ENCODE measurements at regions of chr19 and their contacts with region 1.

Region 1: DNA sequence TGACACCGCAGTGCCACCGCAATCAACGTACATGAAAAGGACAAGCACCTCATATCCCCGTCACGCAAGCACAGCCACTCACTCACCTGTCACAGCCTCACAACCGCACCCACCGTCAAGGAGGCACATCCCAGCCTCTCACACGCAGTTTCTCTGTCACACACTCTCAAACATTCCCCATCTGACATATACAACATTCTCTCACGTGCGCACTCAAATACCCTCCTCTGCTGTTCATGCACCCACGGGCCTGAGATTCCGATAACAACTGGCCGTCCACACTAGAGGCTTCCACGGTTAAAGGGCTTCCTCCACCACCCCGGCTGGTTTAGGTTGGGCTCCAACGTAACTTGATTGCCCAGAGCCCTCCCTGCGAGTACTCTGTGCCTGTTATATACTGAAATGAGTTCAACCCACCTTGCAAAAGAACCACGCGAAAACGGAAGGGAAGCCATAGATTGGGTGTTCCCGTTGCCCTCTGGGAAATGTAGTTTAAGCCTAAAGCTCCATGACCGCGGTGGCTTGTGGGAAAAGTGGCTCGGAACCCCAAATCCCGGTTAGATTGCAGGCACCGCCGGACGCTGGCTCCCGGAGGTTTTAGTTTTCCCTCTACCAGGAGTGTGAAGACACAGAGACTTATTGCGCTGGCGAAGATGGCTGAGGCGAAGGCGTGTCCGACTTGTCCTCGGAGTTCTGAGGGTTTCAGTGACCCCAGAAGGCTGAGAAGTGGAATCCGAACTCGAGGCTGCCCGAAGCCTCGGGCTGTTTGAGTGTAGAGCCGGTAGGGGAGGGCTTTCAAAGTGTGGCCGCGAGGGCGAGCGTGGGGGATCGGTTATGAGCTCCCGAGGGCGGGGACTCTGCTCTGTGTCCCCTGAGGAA is at the start of gene ZNF573:
- H3K4me3 ChIP-seq: peak within 1 kb of the TSS; percentile 56
- H3K27ac ChIP-seq: peak within 1 kb of the TSS; percentile 86
- H3K4me1 ChIP-seq: peaks cover 3% of the 10 kb centered on the region; the same call in 1 of the 2 replicates
- CTCF ChIP-seq: peak; percentile 77

Region 2: GRCh38 chr19:37719111-37719926 is 60.0 kb before region 1 on chr19 and contains the start of gene ZNF607:
- CTCF ChIA-PET with region 1: interaction called, 4 read pairs
- POLR2A ChIA-PET with region 1: interaction called, 12 read pairs
- H3K4me3 ChIP-seq: peak within 1 kb of the TSS; percentile 69
- H3K27ac ChIP-seq: peak within 1 kb of the TSS; percentile 89
- H3K4me1 ChIP-seq: peaks cover 6% of the 10 kb centered on the region
- CTCF ChIP-seq: peak; percentile 94

Region 3: GRCh38 chr19:37763488-37763887 is 15.9 kb before region 1 on chr19:
- CTCF ChIA-PET with region 1: no interaction called
- POLR2A ChIA-PET with region 1: interaction called, 12 read pairs
- H3K4me3 ChIP-seq: no peak overlapping the region
- H3K27ac ChIP-seq: no peak overlapping the region
- H3K4me1 ChIP-seq: no peaks in the 10 kb centered on the region
- CTCF ChIP-seq: no peak

Region 4: GRCh38 chr19:37813340-37813739 is 34.0 kb after region 1 on chr19:
- CTCF ChIA-PET with region 1: no interaction called
- POLR2A ChIA-PET with region 1: no interaction called
- H3K4me3 ChIP-seq: no peak overlapping the region
- H3K27ac ChIP-seq: no peak overlapping the region
- H3K4me1 ChIP-seq: no peaks in the 10 kb centered on the region
- CTCF ChIP-seq: no peak

Measured in HEK293 (cell line).